CD8-positive, alpha-beta T cell (primary cell): ENCODE measurements at regions of chr3 and their contacts with region 1.

Region 1: DNA sequence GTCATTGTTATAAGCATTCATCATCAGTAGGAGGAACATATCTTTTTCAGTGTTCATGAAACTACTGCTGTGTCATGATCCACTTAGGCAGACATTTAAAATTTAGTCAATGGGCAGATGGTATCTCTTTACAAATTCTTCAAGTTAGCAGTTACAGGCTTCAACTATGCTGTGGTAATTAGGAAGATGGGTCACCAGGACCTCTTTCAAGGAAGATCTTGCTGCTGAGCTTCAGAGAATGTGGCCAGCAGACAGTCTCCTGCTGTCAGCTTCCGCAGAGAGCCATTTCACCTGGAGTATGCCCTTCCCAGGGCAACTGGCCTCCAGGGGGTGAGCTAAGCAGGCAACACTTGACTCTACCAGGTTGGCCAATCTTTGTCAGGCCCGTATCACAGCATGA is 19.4 kb downstream of the IFT57 start:
- DNase-seq: no peak
- ATAC-seq: no peak
- H3K4me3 ChIP-seq: no peak overlapping the region
- H3K4me3 Mint-ChIP-seq: no peak overlapping the region
- H3K27ac ChIP-seq: no peak overlapping the region
- H3K27ac Mint-ChIP-seq: no peak overlapping the region
- H3K4me1 ChIP-seq: no peaks in the 10 kb centered on the region
- H3K4me1 Mint-ChIP-seq: peaks cover 11% of the 10 kb centered on the region
- H3K27me3 ChIP-seq: no peaks in the 10 kb centered on the region
- H3K27me3 Mint-ChIP-seq: no peaks in the 10 kb centered on the region
- CTCF ChIP-seq: no peak

Region 2: DNA sequence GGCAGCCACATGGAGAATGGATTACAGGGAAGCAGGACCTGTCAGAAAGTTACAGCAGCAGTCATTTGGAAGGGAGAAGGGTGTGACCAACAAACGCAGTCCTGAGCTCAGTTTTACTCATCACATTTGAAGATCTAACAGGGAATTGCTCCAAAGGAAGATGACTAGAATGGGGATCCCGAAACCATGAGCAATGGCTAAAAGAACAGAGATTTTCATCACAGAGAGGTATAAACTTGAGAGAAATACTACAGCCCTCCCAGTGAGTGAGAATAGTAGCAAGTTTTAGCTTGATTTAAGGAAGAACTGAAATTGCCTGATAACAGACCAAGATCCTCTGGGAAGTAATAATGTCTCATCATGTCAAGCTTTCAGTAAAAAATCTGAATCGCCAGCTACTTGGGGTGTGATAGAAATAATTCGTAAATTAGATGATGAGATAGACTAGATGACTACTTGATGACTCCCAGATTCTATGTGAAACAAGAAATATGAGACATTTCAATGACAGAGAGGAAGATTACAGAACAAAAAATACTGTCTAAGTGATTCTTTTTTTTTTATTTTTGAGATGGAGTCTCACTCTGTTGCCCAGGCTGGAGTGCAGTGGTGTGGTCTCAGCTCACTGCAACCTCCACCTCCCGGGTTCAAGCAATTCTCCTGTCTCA is 128.9 kb before region 1 on chr3:
- CTCF ChIA-PET with region 1: no interaction called
- POLR2A ChIA-PET with region 1: no interaction called
- intact Hi-C with region 1: no loop called
- DNase-seq: no peak
- ATAC-seq: no peak
- H3K4me3 ChIP-seq: no peak overlapping the region
- H3K4me3 Mint-ChIP-seq: no peak overlapping the region
- H3K27ac ChIP-seq: no peak overlapping the region
- H3K27ac Mint-ChIP-seq: peak overlapping the region; percentile 42
- H3K4me1 ChIP-seq: peaks cover 58% of the 10 kb centered on the region
- H3K4me1 Mint-ChIP-seq: peaks cover 74% of the 10 kb centered on the region
- H3K27me3 ChIP-seq: no peaks in the 10 kb centered on the region
- H3K27me3 Mint-ChIP-seq: no peaks in the 10 kb centered on the region
- CTCF ChIP-seq: no peak

Region 3: DNA sequence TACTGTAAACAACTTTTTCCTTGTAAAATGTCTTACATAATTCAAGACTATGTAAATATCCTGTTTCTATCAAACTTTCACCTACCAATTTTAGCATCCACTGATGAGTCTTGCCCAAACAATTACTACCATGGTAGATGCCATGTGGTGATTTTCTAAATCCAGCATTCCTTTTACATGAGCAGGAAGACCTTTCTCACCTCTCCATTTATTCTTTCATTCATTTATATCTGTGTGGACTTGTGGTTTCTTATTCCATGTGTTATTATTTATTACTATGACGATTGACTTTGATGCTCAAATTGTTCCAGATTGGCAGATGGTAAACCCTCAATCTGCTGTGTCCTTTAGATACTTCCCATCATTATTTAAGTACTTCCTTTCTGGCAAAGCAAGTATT is 43.0 kb before region 1 on chr3:
- CTCF ChIA-PET with region 1: no interaction called
- POLR2A ChIA-PET with region 1: no interaction called
- intact Hi-C with region 1: loop called in 1 of 2 experiments (anchors 5 kb)
- DNase-seq: no peak
- ATAC-seq: no peak
- H3K4me3 ChIP-seq: no peak overlapping the region
- H3K4me3 Mint-ChIP-seq: no peak overlapping the region
- H3K27ac ChIP-seq: no peak overlapping the region
- H3K27ac Mint-ChIP-seq: no peak overlapping the region
- H3K4me1 ChIP-seq: no peaks in the 10 kb centered on the region
- H3K4me1 Mint-ChIP-seq: no peaks in the 10 kb centered on the region
- H3K27me3 ChIP-seq: no peaks in the 10 kb centered on the region
- H3K27me3 Mint-ChIP-seq: no peaks in the 10 kb centered on the region
- CTCF ChIP-seq: no peak